GM13976 (cell line): ENCODE measurements at regions of chr18 and their contacts with region 1.

Region 1: DNA sequence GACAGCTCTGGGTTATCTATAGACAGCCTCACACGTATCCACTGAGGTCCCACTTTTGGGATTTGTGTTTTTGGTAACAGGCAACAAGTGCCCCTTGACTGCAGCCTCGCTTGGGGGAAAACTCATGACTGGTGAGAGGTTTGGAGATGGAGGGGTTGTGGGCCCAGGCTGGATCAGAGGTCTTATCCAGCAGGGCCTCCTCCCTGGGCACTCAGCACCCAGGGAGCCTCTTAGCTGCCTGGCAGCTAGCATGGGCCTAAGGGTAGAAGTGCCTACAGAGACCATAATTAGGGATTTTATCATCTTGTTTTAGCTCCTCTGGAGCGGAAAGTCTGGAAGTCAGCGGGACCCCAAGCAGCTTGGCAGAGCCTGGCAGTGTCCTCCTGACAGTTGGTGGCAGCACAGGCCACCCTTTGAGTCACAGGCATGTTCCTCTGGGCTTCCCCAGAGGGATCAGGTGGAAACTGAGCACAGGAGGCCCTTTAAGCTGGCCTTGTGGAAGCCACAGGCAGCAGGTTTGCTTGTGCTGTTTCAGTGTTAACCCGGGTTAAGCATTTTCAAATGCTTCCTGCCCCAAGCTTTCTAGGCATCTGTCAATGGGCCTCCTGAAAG is 143.1 kb downstream of the KCTD1 start:
- DNase-seq: peak; percentile 75
- CTCF ChIP-seq: peak; percentile 78

Region 2: DNA sequence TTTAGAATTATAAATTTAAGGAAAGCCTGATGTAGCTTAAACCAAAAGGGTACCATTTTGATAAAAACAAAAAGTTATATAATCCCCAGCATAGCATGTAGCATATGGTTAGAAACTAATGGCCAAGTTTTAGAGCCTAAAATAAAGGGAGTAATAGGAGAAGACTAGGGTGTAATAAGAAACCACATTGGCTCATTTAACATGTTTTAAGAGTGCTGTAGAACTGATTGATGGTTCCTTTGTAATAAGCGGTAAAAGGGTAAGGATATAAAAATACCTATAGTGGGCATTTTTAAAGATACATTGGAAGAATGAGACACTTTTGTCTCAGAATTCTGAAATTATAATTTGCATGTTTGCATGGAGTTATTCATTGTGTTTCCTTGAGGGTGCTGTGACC is 269.7 kb before region 1 on chr18:
- in situ Hi-C with region 1: no loop called
- DNase-seq: no peak
- CTCF ChIP-seq: no peak

Region 3: GRCh38 chr18:26642440-26643348 is 237.4 kb after region 1 on chr18:
- in situ Hi-C with region 1: loop called (anchors 10 kb)
- DNase-seq: no peak
- CTCF ChIP-seq: no peak

Region 4: DNA sequence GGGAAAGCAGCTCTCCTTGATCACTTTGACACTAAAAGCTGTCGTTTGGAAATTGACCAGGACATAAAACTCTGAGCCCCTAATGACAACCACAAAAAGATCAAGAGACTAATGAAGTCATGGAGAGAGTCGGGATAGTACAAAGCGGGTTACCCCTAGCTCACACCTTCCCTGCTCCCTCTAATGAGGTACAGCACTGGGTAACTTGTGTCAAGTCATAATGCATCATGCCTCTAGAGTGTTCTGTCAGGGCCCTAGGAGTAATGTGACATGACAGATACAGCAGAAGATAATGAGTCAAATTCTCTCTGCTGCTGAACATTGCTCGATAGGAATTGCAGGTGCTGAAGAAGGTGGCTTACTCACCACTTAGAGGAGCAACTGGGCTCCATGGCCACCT is 329.5 kb after region 1 on chr18:
- in situ Hi-C with region 1: no loop called
- DNase-seq: no peak
- CTCF ChIP-seq: no peak

Region 5: DNA sequence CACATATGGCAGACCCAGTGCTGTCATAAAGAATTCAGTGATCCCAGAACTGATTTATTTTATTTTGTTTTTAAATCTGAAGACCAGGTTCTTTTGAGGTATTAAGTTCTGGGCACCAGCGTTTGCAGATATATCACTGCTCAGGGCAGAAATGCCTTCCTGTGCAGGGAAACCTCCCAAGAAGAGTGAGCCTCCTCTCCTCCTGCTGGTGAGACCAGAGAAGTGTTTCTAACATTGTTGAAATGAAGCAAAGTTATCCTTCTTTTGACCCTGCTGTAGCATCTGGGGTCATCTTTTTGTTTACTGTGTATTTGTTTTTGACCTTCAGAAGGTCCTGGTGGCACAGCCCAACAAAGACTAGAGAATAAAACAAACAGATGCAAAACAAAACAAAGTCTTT is 366.2 kb after region 1 on chr18:
- in situ Hi-C with region 1: loop called (anchors 25 kb)
- DNase-seq: no peak
- CTCF ChIP-seq: no peak

Region 6: DNA sequence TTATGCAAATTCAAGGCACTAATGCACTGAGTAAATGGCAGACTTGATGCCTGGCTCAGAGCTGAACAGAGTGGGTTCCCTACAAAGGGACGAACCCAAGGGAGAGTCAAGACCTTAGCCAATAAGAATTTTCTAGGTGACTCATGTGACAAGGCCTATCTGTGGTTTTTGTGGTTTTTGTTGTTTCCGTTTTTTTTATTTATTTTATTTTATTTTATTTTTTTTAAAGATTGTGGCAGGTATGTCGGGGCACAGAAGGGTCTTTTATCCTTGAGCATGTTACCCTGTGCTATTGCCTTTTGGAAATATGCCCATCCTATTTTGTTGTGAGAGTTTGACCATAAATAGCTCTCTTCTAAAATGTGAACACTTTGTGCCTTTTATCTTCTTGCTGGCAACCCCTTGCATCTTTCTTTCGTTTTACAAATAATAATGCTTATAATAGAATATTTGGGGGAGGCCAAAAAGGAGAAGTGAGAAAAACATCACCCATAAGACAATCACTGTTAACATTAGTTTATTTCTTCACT is 573.6 kb after region 1 on chr18:
- in situ Hi-C with region 1: loop called (anchors 25 kb)
- DNase-seq: peak; percentile 57
- CTCF ChIP-seq: no peak